Mammary epithelial cell (primary cell): ENCODE measurements at regions of chr3 and their contacts with region 1.

Region 1: GRCh38 chr3:141738022-141738890 is at the start of gene RNF7:
- DNase-seq: peak; percentile 95
- H3K4me3 ChIP-seq: peak within 1 kb of the TSS; percentile 94 to 98 (median 95)
- H3K27ac ChIP-seq: peak within 1 kb of the TSS; percentile 82
- H3K4me1 ChIP-seq: peaks cover 13% of the 10 kb centered on the region
- H3K27me3 ChIP-seq: no peaks in the 10 kb centered on the region
- CTCF ChIP-seq: peak; percentile 55 to 91
- total RNA-seq, gene RNF7: 48.3 to 97.7 TPM

Region 2: DNA sequence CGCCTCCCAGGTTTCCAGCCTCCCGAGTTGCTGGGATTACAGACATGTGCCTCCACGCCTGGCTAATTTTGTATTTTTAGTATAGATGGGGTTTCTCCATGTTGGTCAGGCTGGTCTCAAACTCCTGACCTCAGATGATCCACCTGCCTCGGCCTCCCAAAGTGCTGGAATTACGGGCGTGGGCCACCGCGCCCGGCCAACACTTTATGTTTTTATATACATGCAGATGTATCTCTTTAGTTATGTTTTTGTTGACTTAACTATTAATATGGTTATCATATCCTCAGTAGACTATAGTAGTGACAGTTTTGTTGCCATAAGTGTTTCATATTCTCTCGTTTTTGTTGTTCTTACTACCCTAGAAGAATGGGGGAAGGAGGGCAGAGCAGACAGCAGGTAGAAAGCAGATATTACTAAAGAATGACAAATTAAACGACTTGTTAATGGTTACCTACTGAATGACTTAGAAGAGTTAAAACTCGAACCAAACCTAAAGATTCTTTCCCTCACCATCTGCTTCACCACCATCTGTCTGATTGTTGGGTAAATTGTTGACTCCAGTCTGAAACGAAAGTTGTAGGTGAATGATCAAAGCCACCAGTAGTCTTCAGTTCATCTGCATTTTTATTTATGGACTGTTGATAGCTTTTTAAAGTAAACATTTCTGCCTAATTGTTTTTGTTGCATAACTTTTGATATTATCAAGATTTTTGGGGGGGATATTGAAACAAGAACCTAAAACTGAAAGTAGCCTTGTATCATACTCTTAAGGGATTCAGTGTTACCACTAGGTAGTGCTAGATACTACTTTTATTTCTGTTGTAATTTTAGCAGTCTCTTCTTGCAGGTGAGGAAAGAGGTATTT is 162.1 kb before region 1 on chr3:
- CTCF ChIA-PET with region 1: no interaction called
- dilution Hi-C with region 1: no loop called
- in situ Hi-C with region 1: no loop called
- intact Hi-C with region 1: loop called (anchors 2 kb)
- DNase-seq: no peak
- H3K4me3 ChIP-seq: no peak overlapping the region
- H3K27ac ChIP-seq: no peak overlapping the region
- H3K4me1 ChIP-seq: no peaks in the 10 kb centered on the region
- H3K27me3 ChIP-seq: no peaks in the 10 kb centered on the region
- CTCF ChIP-seq: peak; percentile 41 to 47

Region 3: DNA sequence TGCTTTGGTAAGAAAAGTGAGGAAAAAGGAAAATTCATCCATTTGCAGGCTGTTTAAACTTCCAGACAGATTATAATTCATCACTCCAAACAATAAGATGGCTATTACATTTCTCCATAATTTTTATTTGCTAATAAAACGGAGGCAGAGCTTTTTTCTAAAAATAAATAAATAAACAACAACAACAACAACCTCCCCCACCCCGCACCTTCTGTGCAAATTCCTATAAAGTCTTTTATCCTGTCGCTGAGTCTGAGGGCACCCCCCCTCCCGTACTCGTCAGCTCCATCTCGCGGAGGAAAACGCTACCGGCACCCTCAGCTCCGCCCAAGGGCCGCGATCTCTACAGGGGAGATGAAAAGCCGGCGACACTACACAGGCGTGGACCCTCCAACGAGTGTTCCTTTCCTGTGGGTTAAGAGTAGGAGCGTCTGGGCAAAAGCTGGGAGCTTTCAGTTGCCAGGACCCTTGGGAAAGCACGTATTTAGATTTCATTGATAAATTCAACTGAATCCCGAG is 137.2 kb after region 1 on chr3:
- CTCF ChIA-PET with region 1: interaction called, 20 read pairs
- dilution Hi-C with region 1: no loop called
- in situ Hi-C with region 1: loop called in 1 of 2 experiments (anchors 10 kb)
- intact Hi-C with region 1: loop called (anchors 1 kb)
- DNase-seq: peak; percentile 75
- H3K4me3 ChIP-seq: peak overlapping the region; percentile 52 to 83 (median 76)
- H3K27ac ChIP-seq: peak overlapping the region; percentile 89
- H3K4me1 ChIP-seq: peaks cover 3% of the 10 kb centered on the region
- H3K27me3 ChIP-seq: no peaks in the 10 kb centered on the region
- CTCF ChIP-seq: peak; percentile 68 to 92

Region 4: DNA sequence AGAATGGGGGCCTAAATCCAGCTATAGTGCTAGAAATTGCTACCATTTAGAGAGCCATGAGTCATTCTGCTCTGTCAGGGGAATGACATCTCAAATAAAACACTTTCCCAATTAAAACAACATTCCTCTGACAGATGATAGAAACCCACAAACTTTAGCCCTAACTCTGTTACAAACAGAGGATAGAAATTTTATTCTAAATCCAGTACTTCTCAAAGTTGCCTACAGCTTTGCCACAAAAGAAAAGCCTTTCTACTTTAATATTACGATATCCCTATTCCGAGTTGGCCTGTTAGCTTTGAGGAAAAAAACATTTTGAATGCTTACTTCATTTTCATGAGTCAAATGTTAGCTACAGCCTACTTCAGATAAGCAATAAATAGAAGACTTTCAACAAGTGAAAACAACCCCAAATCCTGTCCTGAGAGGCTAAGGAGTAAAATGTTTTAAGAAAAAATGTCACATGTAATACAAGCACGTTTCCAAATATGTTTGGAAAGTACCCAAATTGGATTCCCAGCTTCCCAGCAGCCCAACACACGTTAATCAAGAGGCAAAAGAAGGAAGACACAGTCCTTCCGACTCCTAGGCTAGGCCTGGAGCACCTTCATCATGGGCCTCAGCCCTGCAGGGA is 221.8 kb after region 1 on chr3:
- CTCF ChIA-PET with region 1: no interaction called
- dilution Hi-C with region 1: no loop called
- in situ Hi-C with region 1: no loop called
- intact Hi-C with region 1: loop called (anchors 2 kb)
- DNase-seq: peak; percentile 61
- H3K4me3 ChIP-seq: no peak overlapping the region
- H3K27ac ChIP-seq: peak overlapping the region; percentile 57
- H3K4me1 ChIP-seq: peaks cover 21% of the 10 kb centered on the region
- H3K27me3 ChIP-seq: no peaks in the 10 kb centered on the region
- CTCF ChIP-seq: no peak

Region 5: GRCh38 chr3:142447852-142448823 is 709.9 kb after region 1 on chr3 and contains the start of gene XRN1:
- CTCF ChIA-PET with region 1: no interaction called
- dilution Hi-C with region 1: no loop called
- in situ Hi-C with region 1: no loop called
- intact Hi-C with region 1: loop called (anchors 5 kb)
- DNase-seq: peak; percentile 88
- H3K4me3 ChIP-seq: peak within 1 kb of the TSS; percentile 75 to 98 (median 89)
- H3K27ac ChIP-seq: peak within 1 kb of the TSS; percentile 95
- H3K4me1 ChIP-seq: peaks cover 6% of the 10 kb centered on the region
- H3K27me3 ChIP-seq: no peaks in the 10 kb centered on the region
- CTCF ChIP-seq: no peak
- total RNA-seq, gene XRN1: 27.2 to 28.0 TPM